ENCODE measurements at regions of chr17 and their contacts with region 1.

Region 1: DNA sequence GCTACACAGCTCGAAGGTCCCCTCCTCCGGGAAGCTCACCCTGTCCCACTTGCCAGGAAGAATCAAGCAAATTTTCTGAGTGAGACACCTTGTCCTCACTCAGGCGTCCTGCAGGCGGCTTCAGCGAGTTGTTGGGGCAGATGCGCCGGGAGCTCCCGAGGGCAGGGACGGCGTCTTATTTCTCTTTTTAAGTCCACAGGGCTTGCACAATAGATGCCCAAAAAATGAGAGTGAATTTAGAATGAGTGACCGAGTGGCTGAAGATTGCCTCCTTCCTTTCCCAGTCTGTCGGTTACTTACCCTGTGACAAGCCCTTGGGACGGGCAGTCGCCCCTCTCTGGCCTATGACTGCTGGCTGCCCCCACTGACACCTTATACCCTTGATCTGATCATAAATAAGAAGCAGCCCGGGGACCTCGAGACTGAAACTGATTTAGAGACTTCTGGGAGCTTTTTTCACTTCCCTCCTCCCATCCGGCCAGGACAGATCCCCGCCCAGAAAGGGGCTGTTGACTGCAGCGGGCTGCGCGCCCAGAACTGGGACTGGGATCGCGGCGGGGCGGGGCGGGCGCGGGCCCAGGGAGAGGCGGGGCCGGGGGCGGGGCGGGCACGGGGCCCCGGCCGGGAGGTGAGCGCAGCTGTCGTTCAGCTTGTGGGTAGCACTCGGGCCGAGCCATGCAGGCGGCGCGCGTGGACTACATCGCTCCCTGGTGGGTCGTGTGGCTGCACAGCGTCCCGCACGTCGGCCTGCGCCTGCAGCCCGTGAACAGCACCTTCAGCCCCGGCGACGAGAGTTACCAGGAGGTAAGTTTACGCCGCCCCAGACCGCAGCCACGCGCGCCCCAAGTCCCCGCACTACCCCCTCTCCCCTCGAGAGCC is at the start of gene TTYH2:
- DNase-seq: peak; percentile 74
- ATAC-seq: peak; percentile 34
- H3K4me3 Mint-ChIP-seq: peak within 1 kb of the TSS; percentile 93
- H3K27ac Mint-ChIP-seq: peak within 1 kb of the TSS; percentile 65
- H3K4me1 Mint-ChIP-seq: peaks cover 45% of the 10 kb centered on the region
- H3K27me3 Mint-ChIP-seq: peaks cover 37% of the 10 kb centered on the region
- CTCF ChIP-seq: no peak
- total RNA-seq, gene TTYH2: 3.5 to 5.1 TPM (median 4.5 TPM) in 3 replicates

Region 2: GRCh38 chr17:74135391-74136167 is 77.6 kb before region 1 on chr17:
- CTCF ChIA-PET with region 1: no interaction called
- POLR2A ChIA-PET with region 1: no interaction called
- DNase-seq: no peak
- ATAC-seq: no peak
- H3K4me3 Mint-ChIP-seq: no peak overlapping the region
- H3K27ac Mint-ChIP-seq: no peak overlapping the region
- H3K4me1 Mint-ChIP-seq: peaks cover 15% of the 10 kb centered on the region
- H3K27me3 Mint-ChIP-seq: peaks cover 9% of the 10 kb centered on the region; the same call in 1 of the 2 replicates
- CTCF ChIP-seq: no peak

Region 3: GRCh38 chr17:74259667-74260524 is 46.7 kb after region 1 on chr17:
- CTCF ChIA-PET with region 1: interaction called, 21 read pairs
- POLR2A ChIA-PET with region 1: interaction called, 5 read pairs
- DNase-seq: peak; percentile 22
- ATAC-seq: peak; percentile 65
- H3K4me3 Mint-ChIP-seq: peak overlapping the region; percentile 31; the same call in 1 of the 2 replicates
- H3K27ac Mint-ChIP-seq: peak overlapping the region; percentile 60; the same call in 1 of the 2 replicates
- H3K4me1 Mint-ChIP-seq: peaks cover 18% of the 10 kb centered on the region
- H3K27me3 Mint-ChIP-seq: no peaks in the 10 kb centered on the region; the same call in 1 of the 2 replicates
- CTCF ChIP-seq: no peak

Region 4: GRCh38 chr17:74296548-74296936 is 83.4 kb after region 1 on chr17:
- CTCF ChIA-PET with region 1: interaction called, 15 read pairs
- POLR2A ChIA-PET with region 1: no interaction called
- DNase-seq: peak; percentile 56
- ATAC-seq: peak; percentile 74
- H3K4me3 Mint-ChIP-seq: no peak overlapping the region
- H3K27ac Mint-ChIP-seq: no peak overlapping the region
- H3K4me1 Mint-ChIP-seq: no peaks in the 10 kb centered on the region
- H3K27me3 Mint-ChIP-seq: peaks cover 2% of the 10 kb centered on the region; the same call in 1 of the 2 replicates
- CTCF ChIP-seq: no peak; the same call in 1 of the 2 replicates

Measured in WTC11 (cell line).